Right cardiac atrium (tissue), 5 donors: ENCODE measurements at regions of chr10 and their contacts with region 1.

Region 1: DNA sequence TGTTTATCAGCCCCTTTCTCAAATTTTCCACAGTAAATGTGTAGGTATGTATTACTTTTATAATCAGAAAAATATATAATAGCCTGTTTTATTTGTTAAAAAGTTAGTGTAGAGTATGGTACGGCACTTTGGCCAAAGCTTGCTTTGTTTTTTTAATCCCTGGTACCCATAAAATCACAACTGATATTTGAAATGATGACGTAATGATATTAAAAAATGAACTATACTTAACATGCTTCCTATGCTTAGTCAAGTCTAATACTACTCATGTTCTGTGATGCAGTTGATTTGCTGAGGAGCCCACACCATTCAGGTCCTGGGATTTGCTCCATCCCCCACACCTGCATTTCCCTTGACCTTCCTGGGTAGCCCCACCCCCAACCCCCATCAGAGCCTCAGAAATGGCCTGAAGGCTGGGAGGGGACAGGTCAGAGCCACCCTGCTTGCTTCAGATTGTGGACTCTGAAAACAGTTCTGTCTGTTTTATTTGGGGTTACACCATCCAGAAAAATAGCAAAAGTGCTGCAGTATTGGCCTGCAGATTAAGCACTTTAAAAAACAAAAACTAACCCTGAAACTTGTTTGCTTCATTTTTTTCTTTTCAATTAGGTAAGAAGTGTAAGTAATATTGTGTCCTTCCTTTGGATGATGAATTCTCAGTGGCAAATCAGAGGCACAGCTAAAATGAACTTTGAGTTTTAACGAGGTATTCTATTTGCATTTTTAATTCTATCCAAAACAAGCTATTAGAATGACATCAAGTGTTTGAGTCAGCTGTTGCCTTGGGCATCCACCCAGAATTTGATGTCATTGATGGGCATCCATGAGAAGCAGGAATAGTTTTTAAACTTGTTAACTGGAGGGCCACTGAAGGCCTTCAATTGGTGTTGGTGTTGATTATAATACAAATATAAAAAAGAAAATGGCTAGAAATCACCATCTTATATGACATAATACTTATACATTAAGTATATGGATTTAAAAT is 23.3 kb downstream of the PLCE1 start:
- DNase-seq: peak in 2 of 3 donors; percentile 31 to 71
- ATAC-seq: peak in 1 of 2 donors; percentile 35
- H3K4me3 ChIP-seq: no peak overlapping the region
- H3K27ac ChIP-seq: peak overlapping the region; percentile 62
- H3K4me1 ChIP-seq: peaks cover 8% of the 10 kb centered on the region
- H3K27me3 ChIP-seq: no peaks in the 10 kb centered on the region

Region 2: GRCh38 chr10:94133239-94133638 is 116.2 kb after region 1 on chr10:
- intact Hi-C with region 1: loop called in 1 of 4 experiments (anchors 10 kb)
- DNase-seq: peak; percentile 73 to 90 (median 86)
- ATAC-seq: peak; percentile 85 to 91
- H3K4me3 ChIP-seq: no peak overlapping the region
- H3K27ac ChIP-seq: peak overlapping the region; percentile 75
- H3K4me1 ChIP-seq: peaks cover 11% of the 10 kb centered on the region
- H3K27me3 ChIP-seq: no peaks in the 10 kb centered on the region